ENCODE measurements at regions of chr7 and their contacts with region 1.

Region 1: DNA sequence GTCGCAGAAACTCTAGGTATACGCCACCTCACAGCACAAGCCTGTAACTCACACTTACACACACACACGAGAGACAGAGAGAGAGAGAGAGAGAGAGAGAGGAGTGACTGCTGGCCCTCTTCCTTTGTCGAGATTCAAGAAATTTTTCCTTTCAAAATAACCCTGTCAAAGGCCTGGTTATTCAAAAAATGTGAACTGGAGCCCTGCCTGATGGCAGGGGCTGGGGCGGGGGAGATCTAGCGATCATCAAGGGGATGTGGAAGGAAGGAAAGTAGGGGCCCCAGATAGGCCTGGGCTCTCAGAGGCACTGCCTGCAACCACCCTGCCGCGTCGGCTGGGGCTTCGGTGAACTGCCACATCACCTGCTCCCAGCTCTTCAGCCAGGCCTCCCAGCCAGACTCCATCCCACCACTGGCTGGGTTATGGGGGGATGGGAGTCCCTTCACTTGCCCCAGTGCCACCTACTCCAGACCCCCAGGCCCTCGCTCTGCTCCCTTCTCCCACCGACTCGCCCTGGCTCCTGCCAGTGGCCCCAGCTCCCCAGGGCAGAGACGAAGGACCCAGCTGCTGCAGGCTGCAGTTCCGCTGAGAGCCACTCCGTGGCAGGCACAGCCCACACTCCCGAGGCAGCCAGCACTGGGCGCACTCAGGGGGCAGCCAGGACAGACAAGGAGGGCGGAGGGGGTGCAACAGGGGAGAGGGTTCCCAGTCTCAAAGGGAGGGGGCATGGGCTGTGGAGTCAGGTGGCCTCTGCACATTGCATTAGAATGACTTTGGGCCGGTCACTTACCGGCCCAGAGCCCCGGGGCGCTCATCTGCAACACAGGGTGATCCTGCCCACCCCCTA is 15.3 kb downstream of the KCNH2 start:
- DNase-seq: peak; percentile 60 to 73 (median 69)
- H3K4me3 ChIP-seq: no peak overlapping the region
- H3K27ac ChIP-seq: peak overlapping the region in 1 of 2 experiments; percentile 49
- H3K4me1 ChIP-seq: peaks cover 0 to 38% (median 31%) of the 10 kb centered on the region in 4 experiments
- H3K27me3 ChIP-seq: peaks cover 0 to 40% (median 19%) of the 10 kb centered on the region in 5 experiments

Region 2: GRCh38 chr7:150898475-150899011 is 64.2 kb before region 1 on chr7:
- CTCF ChIA-PET with region 1: interaction called, 14 read pairs
- POLR2A ChIA-PET with region 1: no interaction called
- DNase-seq: peak; percentile 60 to 68 (median 64)
- H3K4me3 ChIP-seq: no peak overlapping the region
- H3K27ac ChIP-seq: no peak overlapping the region
- H3K4me1 ChIP-seq: peaks cover 0 to 21% (median 11%) of the 10 kb centered on the region in 4 experiments
- H3K27me3 ChIP-seq: peaks cover 0 to 35% (median 19%) of the 10 kb centered on the region in 5 experiments

Region 3: GRCh38 chr7:150945833-150946420 is 16.8 kb before region 1 on chr7:
- CTCF ChIA-PET with region 1: interaction called, 10 read pairs
- POLR2A ChIA-PET with region 1: no interaction called
- DNase-seq: no peak
- H3K4me3 ChIP-seq: no peak overlapping the region
- H3K27ac ChIP-seq: no peak overlapping the region
- H3K4me1 ChIP-seq: peaks cover 0 to 42% (median 21%) of the 10 kb centered on the region in 4 experiments
- H3K27me3 ChIP-seq: peaks cover 0 to 33% (median 7%) of the 10 kb centered on the region in 5 experiments

Region 4: GRCh38 chr7:150988230-150989226 is 25.8 kb after region 1 on chr7:
- CTCF ChIA-PET with region 1: interaction called, 215 read pairs
- POLR2A ChIA-PET with region 1: interaction called, 4 read pairs
- DNase-seq: peak; percentile 67 to 82 (median 78)
- H3K4me3 ChIP-seq: no peak overlapping the region
- H3K27ac ChIP-seq: no peak overlapping the region
- H3K4me1 ChIP-seq: peaks cover 0 to 23% (median 15%) of the 10 kb centered on the region in 4 experiments
- H3K27me3 ChIP-seq: peaks cover 0 to 22% (median 9%) of the 10 kb centered on the region in 5 experiments

Region 5: DNA sequence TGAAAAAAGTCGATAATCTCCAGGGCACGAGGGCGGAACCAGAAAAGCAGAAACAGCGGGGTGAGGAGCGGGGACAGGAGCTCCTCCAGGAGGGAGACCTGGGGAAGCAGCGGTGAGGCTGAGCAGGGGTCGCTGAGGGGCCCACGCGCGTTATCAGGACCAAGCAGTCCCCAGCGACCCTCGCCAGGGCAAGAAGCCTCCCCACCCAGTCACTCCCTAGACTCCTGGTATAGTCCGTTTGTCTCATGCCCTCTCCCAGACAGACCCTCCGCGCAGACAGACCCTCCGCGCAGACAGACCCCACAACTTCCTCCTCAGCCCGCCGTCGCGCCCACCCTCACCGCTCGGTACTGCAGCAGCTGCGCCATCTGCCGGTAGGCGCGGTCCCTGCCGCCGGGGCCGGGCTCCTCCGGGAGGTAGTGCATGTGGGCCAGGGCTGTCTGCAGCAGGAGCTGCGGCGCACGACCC is 55.2 kb after region 1 on chr7:
- CTCF ChIA-PET with region 1: interaction called, 30 read pairs
- POLR2A ChIA-PET with region 1: no interaction called
- DNase-seq: peak; percentile 70 to 87 (median 86)
- H3K4me3 ChIP-seq: peak overlapping the region in 6 of 7 experiments; percentile 14 to 66 (median 46)
- H3K27ac ChIP-seq: peak overlapping the region in 1 of 2 experiments; percentile 61
- H3K4me1 ChIP-seq: peaks cover 0 to 40% (median 31%) of the 10 kb centered on the region in 4 experiments
- H3K27me3 ChIP-seq: peaks cover 5 to 40% (median 13%) of the 10 kb centered on the region in 5 experiments

Region 6: GRCh38 chr7:151028131-151028947 is 65.6 kb after region 1 on chr7 and contains the start of gene ABCB8:
- CTCF ChIA-PET with region 1: no interaction called
- POLR2A ChIA-PET with region 1: no interaction called
- DNase-seq: peak; percentile 99
- H3K4me3 ChIP-seq: peak within 1 kb of the TSS; percentile 72 to 90 (median 84)
- H3K27ac ChIP-seq: peak within 1 kb of the TSS; percentile 75 to 89
- H3K4me1 ChIP-seq: peaks cover 7 to 18% (median 14%) of the 10 kb centered on the region in 4 experiments
- H3K27me3 ChIP-seq: peaks cover 0 to 3% (median 0%) of the 10 kb centered on the region in 5 experiments

Region 7: GRCh38 chr7:151051108-151051507 is 88.3 kb after region 1 on chr7:
- CTCF ChIA-PET with region 1: no interaction called
- POLR2A ChIA-PET with region 1: no interaction called
- DNase-seq: peak; percentile 87 to 93 (median 93)
- H3K4me3 ChIP-seq: no peak overlapping the region
- H3K27ac ChIP-seq: no peak overlapping the region
- H3K4me1 ChIP-seq: peaks cover 0 to 44% (median 34%) of the 10 kb centered on the region in 4 experiments
- H3K27me3 ChIP-seq: peaks cover 0 to 13% (median 0%) of the 10 kb centered on the region in 5 experiments